Activated CD4-positive, alpha-beta T cell treated with anti-CD3 and anti-CD28 coated beads, Interleukin-2, amount 10 ng/mL, durations not matched to agents 7 days and 5 days (primary cell): ENCODE measurements at regions of chr10 and their contacts with region 1.

Region 1: GRCh38 chr10:12466704-12467305 is 117.5 kb downstream of the CAMK1D start:
- DNase-seq: no peak
- H3K4me3 Mint-ChIP-seq: no peak overlapping the region
- H3K27ac Mint-ChIP-seq: no peak overlapping the region
- H3K4me1 Mint-ChIP-seq: peaks cover 16% of the 10 kb centered on the region
- H3K27me3 Mint-ChIP-seq: no peaks in the 10 kb centered on the region

Region 2: DNA sequence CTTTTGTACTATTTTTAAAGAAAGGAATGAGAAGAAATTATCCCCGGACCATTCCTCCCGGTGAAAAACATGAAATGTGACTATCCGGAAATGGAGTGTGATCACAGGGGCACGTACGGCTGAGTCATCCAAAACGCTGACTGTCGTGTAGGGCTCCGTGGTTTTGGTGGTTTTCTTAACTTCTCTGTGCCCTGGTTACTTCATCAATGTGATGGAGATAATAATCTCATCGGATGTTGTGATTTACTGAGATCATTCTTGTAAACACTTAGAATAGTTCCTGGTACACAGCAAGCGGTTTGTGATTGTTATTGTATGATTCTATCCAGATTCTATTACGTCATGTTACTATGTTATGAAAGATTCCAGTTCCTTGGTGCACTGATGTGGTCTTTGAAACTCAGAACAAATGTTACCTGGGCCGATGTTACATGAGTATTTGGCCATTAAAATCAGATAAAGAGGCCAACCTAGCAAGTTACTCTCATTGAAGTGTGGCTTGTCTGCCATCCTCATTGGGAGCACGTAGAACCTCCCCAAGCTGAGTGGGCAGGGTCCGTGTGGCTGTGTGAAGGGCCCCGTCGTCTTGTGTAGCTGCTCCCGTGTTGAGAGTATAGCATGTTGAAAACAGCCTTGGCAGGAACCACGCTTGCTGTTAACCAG is 17.9 kb before region 1 on chr10:
- CTCF ChIA-PET with region 1: interaction called, 11 read pairs
- POLR2A ChIA-PET with region 1: no interaction called
- DNase-seq: peak; percentile 88
- H3K4me3 Mint-ChIP-seq: peak overlapping the region; percentile 3
- H3K27ac Mint-ChIP-seq: peak overlapping the region; percentile 90
- H3K4me1 Mint-ChIP-seq: peaks cover 23% of the 10 kb centered on the region
- H3K27me3 Mint-ChIP-seq: peaks cover 4% of the 10 kb centered on the region